Activated CD8-positive, alpha-beta T cell treated with anti-CD3 and anti-CD28 coated beads for 36 hours (primary cell): ENCODE measurements at regions of chr9 and their contacts with region 1.

Region 1: GRCh38 chr9:17810728-17811571 is 232.1 kb downstream of the SH3GL2 start:
- DNase-seq: peak; percentile 64
- ATAC-seq: no peak
- H3K4me3 Mint-ChIP-seq: no peak overlapping the region
- H3K27ac Mint-ChIP-seq: no peak overlapping the region
- H3K4me1 Mint-ChIP-seq: no peaks in the 10 kb centered on the region
- H3K27me3 Mint-ChIP-seq: peaks cover 6% of the 10 kb centered on the region
- CTCF ChIP-seq: peak; percentile 84

Region 2: GRCh38 chr9:17863213-17863883 is 52.4 kb after region 1 on chr9:
- CTCF ChIA-PET with region 1: no interaction called
- POLR2A ChIA-PET with region 1: no interaction called
- intact Hi-C with region 1: no loop called
- DNase-seq: no peak
- ATAC-seq: no peak
- H3K4me3 Mint-ChIP-seq: no peak overlapping the region
- H3K27ac Mint-ChIP-seq: no peak overlapping the region
- H3K4me1 Mint-ChIP-seq: no peaks in the 10 kb centered on the region
- H3K27me3 Mint-ChIP-seq: no peaks in the 10 kb centered on the region
- CTCF ChIP-seq: no peak

Region 3: DNA sequence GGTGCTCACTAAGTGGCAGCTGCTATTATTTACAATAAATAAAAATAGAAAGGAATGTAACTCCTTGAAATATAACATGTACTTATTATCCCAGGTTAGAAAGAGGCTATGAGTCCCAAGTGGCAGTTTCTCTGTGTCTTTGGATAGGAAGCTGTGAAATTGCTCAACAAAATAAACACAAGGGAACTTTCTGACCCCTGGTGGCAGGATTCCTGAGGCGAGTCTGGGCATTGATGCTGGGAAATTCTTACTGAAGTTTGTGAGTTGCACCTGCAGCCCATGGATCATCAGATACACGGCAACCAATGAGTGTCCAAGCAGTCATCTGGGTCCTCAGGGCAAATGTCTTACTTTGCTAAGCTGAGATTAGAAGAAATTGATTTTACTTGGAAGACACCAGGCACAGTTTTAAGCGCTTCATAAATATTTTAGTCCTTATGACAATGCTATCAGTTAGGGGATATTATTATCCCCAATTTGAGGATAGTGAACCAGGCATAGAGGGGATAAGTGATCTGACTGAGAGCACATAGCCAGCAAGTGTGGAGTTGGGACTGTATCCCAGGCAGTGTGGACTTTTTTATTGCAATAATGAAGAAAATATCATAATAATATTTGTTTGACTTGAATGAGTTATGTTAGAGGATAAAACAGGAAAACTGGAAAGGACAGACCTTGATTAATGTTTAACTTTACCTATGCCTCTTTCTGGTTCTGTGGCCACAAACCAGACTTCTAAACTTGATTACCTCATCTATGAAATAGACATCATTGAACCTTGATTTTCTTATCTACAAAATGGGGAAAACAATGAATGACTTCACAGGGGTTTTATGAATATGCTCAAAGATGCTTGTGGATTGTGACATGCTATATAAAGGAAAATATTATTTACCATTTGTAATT is 397.5 kb after region 1 on chr9:
- CTCF ChIA-PET with region 1: interaction called, 15 read pairs
- POLR2A ChIA-PET with region 1: no interaction called
- intact Hi-C with region 1: loop called (anchors 5 kb)
- DNase-seq: peak; percentile 1
- ATAC-seq: no peak
- H3K4me3 Mint-ChIP-seq: no peak overlapping the region
- H3K27ac Mint-ChIP-seq: no peak overlapping the region
- H3K4me1 Mint-ChIP-seq: no peaks in the 10 kb centered on the region
- H3K27me3 Mint-ChIP-seq: no peaks in the 10 kb centered on the region
- CTCF ChIP-seq: no peak